Thyroid gland (tissue), 4 donors: ENCODE measurements at regions of chr16 and their contacts with region 1.

Region 1: DNA sequence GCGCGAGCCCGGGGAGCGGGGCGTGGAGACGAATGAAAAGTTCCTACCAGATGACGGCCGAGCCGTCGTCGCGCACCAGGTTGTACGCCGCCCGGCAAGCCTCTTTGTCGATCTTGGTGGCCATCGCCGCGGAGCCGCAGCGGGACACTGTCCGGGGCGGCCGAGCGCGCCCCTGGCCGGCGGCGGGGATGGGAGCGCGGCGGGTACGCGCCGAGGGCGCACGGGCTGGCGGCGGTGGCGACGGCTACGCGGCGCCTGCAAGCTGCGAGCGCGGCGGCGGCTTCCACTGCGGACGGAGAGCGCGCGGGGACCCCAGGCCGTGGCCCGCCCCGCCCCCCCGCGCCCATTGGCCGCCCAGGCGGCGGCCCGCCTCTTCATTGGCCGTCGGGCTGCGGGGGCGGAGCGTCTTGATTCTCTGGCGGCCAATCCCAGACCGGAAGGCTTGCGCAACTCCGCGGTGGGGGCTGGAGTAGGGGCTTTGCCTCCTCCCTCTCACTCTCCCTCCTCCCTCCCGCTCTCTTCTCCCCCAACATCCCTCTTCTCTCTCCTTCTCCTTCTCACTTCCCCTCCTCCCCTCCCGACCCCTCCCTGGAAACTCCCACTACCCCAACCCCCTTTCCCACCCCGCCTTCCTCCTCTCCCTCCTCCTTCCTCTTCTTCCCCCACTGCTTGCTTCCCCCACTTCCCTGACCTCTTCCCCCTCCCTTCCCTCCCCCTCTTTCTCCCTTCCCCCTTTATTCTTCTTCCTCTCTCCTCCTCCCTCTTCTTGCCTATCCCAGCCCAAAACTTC is at the start of gene COTL1:
- DNase-seq: peak; percentile 96 to 98
- H3K4me3 ChIP-seq: peak within 1 kb of the TSS; percentile 66 to 77 (median 75)
- H3K27ac ChIP-seq: peak within 1 kb of the TSS; percentile 52 to 75 (median 73)
- H3K4me1 ChIP-seq: peaks cover 24 to 36% of the 10 kb centered on the region in 2 donors
- H3K27me3 ChIP-seq: no peaks in the 10 kb centered on the region
- CTCF ChIP-seq: peak in 1 of 6 experiments; percentile 8
- POLR2A ChIP-seq: peak; percentile 83 to 97
- total RNA-seq, gene COTL1: 26.0 to 39.7 (median 31.4) TPM

Region 2: GRCh38 chr16:84518748-84519341 is 99.1 kb before region 1 on chr16:
- intact Hi-C with region 1: no loop called
- DNase-seq: no peak
- H3K4me3 ChIP-seq: no peak overlapping the region
- H3K27ac ChIP-seq: no peak overlapping the region
- H3K4me1 ChIP-seq: peaks cover 4 to 7% of the 10 kb centered on the region in 2 donors
- H3K27me3 ChIP-seq: no peaks in the 10 kb centered on the region
- CTCF ChIP-seq: no peak
- POLR2A ChIP-seq: no peak

Region 3: GRCh38 chr16:84726079-84726668 is 108.2 kb after region 1 on chr16:
- intact Hi-C with region 1: loop called (anchors 5 kb)
- DNase-seq: peak; percentile 90 to 93
- H3K4me3 ChIP-seq: no peak overlapping the region
- H3K27ac ChIP-seq: no peak overlapping the region
- H3K4me1 ChIP-seq: peaks cover 21 to 31% of the 10 kb centered on the region in 2 donors
- H3K27me3 ChIP-seq: no peaks in the 10 kb centered on the region
- CTCF ChIP-seq: peak; percentile 79 to 93 (median 90)
- POLR2A ChIP-seq: no peak

Region 4: GRCh38 chr16:84738255-84739038 is 120.5 kb after region 1 on chr16:
- intact Hi-C with region 1: loop called (anchors 5 kb)
- DNase-seq: peak; percentile 75 to 80
- H3K4me3 ChIP-seq: no peak overlapping the region
- H3K27ac ChIP-seq: peak overlapping the region; percentile 19 to 71 (median 63)
- H3K4me1 ChIP-seq: peaks cover 28 to 52% of the 10 kb centered on the region in 2 donors
- H3K27me3 ChIP-seq: no peaks in the 10 kb centered on the region
- CTCF ChIP-seq: peak in 5 of 6 experiments; percentile 69 to 89 (median 74)
- POLR2A ChIP-seq: no peak